AG04450 (cell line): ENCODE measurements at regions of chr10 and their contacts with region 1.

Region 1: DNA sequence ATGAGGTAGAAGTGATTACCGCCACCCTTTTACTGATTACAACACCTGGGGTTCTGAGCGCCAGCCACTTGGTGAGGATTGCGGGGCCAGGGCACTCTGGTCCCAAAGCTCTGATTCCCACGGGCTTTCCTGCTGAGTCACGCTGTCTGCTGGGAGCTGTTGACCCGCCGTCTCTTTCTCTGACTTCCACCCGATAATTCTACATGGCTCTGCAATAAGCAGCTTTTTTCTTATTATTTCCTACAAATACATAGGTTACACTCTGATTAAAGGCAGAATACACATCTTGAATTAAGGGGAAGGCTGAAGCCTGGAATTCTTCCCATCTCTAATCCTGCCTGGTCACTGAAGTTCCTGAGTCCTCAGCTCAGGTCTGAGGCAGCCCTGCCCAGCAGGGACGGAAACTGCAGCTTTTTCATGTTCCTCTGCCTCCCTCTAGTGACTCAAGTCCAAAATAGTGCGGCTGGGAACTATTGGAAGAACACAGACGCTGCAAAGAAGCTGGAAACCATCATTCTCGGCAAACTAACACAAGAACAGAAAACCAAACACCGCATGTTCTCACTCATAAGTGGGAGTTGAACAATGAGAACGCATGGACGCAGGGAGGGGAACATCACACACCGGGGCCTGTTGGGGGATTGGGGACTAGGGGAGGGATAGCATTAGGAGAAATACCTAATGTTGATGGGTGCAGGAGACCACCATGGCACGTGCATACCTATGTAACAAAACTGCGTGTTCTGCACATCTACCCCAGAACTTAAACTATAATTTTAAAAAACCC is 178.3 kb downstream of the PRKCQ start:
- DNase-seq: peak; percentile 84
- H3K4me3 ChIP-seq: peak overlapping the region; percentile 38
- H3K27ac ChIP-seq: peak overlapping the region; percentile 63
- H3K27me3 ChIP-seq: no peaks in the 10 kb centered on the region
- CTCF ChIP-seq: peak; percentile 77

Region 2: DNA sequence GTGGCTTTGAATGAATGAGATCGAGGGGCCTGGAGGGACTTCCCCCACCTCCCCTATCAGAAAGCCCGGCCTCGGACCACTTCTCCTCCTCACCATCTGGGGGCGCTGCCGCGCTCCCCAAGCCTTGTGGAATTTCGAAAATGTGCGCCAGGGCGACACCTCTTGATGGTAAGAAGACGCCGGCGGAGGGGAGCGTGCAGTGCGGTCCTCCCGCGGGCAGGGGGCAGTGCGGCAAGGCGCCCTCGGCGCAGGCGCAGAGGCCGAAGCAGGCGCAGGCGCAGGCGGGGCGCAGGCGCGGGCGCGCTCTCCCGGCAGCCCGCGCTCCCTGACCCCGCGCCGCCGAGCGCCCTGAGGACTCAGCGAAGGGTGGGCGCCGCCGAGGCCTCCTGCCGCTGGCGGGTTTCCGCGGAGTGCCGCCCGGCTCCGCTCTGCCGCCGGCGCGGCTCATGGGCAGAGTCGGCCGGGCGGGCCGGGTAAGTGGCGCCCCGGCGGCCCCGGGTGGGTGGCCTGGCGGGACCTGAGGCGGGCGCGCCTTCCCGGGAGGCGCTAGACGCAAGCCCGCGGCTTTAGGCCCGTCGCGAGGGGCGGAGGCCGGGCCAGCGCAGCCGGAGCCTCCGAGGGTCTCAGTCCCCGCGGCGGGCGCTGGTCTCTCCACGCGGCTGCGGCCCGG is 312.9 kb before region 1 on chr10 and contains the start of gene RBM17:
- CTCF ChIA-PET with region 1: interaction called, 18 read pairs
- POLR2A ChIA-PET with region 1: interaction called, 8 read pairs
- DNase-seq: peak; percentile 93
- H3K4me3 ChIP-seq: peak within 1 kb of the TSS; percentile 96
- H3K27ac ChIP-seq: peak within 1 kb of the TSS; percentile 47
- H3K27me3 ChIP-seq: no peaks in the 10 kb centered on the region
- CTCF ChIP-seq: peak; percentile 99
- polyA plus RNA-seq, gene RBM17: 38.9 and 45.0 TPM in 2 replicates

Region 3: DNA sequence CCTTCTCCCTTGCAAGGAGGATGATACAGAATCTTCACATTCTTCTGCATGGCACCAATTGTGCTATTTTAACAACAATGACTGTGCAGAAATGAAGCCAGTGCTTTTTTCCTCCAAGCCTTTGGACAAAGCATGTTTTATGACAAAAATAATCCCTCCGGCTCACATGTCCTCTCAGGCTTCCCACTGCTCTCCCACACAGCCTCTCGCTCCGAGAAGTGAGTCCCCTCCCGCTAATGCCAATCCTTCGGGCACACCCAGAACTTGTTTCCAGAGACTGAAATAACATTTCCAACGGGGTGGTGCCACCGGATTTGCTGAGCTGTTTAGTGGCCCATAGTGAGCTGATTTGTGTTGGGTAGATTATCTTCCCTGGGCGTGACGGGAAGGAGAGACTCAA is 277.1 kb before region 1 on chr10:
- CTCF ChIA-PET with region 1: interaction called, 16 read pairs
- POLR2A ChIA-PET with region 1: no interaction called
- DNase-seq: no peak
- H3K4me3 ChIP-seq: no peak overlapping the region
- H3K27ac ChIP-seq: no peak overlapping the region
- H3K27me3 ChIP-seq: no peaks in the 10 kb centered on the region
- CTCF ChIP-seq: no peak

Region 4: GRCh38 chr10:6151087-6151977 is 250.4 kb before region 1 on chr10:
- CTCF ChIA-PET with region 1: interaction called, 30 read pairs
- POLR2A ChIA-PET with region 1: no interaction called
- DNase-seq: no peak
- H3K4me3 ChIP-seq: no peak overlapping the region
- H3K27ac ChIP-seq: peak overlapping the region; percentile 21
- H3K27me3 ChIP-seq: no peaks in the 10 kb centered on the region
- CTCF ChIP-seq: peak; percentile 83

Region 5: DNA sequence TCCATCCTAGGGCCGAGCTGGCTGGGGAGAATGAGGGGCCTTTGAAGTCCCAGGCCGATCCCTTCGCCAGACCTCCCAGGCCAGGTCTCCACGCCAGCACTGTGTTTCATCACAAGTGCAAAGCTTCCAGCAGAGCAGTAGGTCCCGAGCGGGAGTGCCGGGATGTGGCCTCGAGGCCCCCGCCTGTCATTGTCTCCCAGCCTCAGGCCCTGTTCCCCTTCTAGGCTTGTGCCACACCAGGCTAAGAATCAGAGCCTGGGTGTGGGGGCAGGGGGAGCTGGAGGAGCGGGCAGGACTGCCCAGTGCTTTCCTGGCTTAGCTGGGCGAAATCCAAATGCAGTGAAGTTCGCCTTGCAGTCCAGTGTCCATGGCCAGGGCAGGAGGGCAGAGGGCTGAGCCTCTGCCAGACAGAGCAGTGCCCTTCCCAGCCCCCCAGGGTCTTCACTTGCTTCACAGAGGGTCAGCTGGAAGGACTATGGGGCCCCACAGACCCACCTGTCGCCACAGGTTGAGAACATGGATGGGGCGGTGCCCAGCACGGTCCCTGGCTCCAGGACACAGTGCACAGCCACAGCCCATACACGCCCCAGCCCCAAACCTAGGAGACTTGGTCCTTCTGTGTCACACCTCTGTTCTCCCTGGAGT is 219.2 kb before region 1 on chr10:
- CTCF ChIA-PET with region 1: interaction called, 10 read pairs
- POLR2A ChIA-PET with region 1: no interaction called
- DNase-seq: no peak
- H3K4me3 ChIP-seq: no peak overlapping the region
- H3K27ac ChIP-seq: no peak overlapping the region
- H3K27me3 ChIP-seq: no peaks in the 10 kb centered on the region
- CTCF ChIP-seq: no peak

Region 6: GRCh38 chr10:6211671-6212635 is 189.8 kb before region 1 on chr10:
- CTCF ChIA-PET with region 1: interaction called, 20 read pairs
- POLR2A ChIA-PET with region 1: no interaction called
- DNase-seq: no peak
- H3K4me3 ChIP-seq: no peak overlapping the region
- H3K27ac ChIP-seq: peak overlapping the region; percentile 21
- H3K27me3 ChIP-seq: no peaks in the 10 kb centered on the region
- CTCF ChIP-seq: no peak

Region 7: DNA sequence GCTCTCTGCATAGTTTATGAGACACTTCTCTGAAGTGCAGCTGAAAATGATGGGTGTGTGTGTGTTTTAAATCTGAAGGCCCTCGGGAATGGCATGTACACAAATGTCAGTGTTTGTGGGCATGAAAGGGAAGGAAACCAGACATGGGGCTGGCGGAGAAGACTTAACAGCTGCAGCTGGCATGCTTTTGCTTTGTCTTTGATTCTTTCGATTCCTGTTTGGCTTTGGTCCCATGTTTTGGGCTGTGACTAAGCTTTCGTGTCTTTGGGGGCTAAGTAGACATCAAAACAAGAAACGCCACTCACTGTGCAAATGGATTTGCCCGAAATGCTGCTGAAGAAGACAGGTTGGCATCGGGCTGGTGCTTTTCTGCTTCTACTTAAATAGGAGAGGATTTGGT is 19.7 kb before region 1 on chr10:
- CTCF ChIA-PET with region 1: interaction called, 14 read pairs
- POLR2A ChIA-PET with region 1: interaction called, 10 read pairs
- DNase-seq: peak; percentile 61
- H3K4me3 ChIP-seq: no peak overlapping the region
- H3K27ac ChIP-seq: peak overlapping the region; percentile 42
- H3K27me3 ChIP-seq: peaks cover 6% of the 10 kb centered on the region
- CTCF ChIP-seq: no peak

Region 8: DNA sequence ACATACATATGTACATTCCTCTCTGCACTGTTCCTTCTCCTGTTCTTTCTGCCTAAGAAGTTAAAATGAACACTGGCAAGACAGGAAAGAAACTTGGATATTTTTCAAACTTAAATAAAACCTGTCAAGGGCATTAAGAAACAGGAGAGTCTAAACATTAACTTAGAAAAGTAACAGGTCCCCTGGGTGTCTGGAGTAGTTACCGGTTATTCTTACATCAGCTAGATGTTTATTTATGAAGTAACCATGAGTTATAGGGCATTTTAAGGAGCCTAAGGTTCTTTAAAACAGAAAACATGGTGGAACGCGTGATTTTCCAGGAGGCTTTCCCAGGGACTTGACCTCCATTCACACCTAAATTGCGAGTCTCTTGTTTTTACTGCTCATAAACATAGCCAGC is 30.1 kb after region 1 on chr10:
- CTCF ChIA-PET with region 1: no interaction called
- POLR2A ChIA-PET with region 1: no interaction called
- DNase-seq: no peak
- H3K4me3 ChIP-seq: no peak overlapping the region
- H3K27ac ChIP-seq: no peak overlapping the region
- H3K27me3 ChIP-seq: no peaks in the 10 kb centered on the region
- CTCF ChIP-seq: no peak

Region 9: GRCh38 chr10:6445501-6446316 is 44.0 kb after region 1 on chr10:
- CTCF ChIA-PET with region 1: no interaction called
- POLR2A ChIA-PET with region 1: no interaction called
- DNase-seq: peak; percentile 2
- H3K4me3 ChIP-seq: no peak overlapping the region
- H3K27ac ChIP-seq: no peak overlapping the region
- H3K27me3 ChIP-seq: peaks cover 8% of the 10 kb centered on the region
- CTCF ChIP-seq: peak; percentile 68

Region 10: DNA sequence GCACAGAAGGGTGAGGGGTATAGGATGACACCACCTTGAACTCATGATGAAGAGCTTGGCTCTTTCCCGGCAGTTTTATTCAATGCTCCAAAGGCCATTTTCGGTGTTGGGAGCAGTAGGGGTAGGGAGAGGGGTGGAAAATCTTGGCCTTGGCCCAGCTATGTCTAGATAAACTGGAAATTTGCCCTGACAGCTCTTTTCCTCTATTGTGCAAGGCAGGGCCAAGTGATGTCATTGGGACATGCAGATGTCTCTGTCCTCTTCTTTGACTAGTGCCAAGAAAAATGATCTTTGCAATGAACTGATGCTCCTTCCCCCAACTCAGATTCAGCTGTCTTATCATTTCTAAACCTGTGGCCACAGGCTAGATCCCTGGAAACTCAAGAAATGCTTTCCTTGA is 206.0 kb after region 1 on chr10:
- CTCF ChIA-PET with region 1: no interaction called
- POLR2A ChIA-PET with region 1: no interaction called
- DNase-seq: no peak
- H3K4me3 ChIP-seq: no peak overlapping the region
- H3K27ac ChIP-seq: no peak overlapping the region
- H3K27me3 ChIP-seq: no peaks in the 10 kb centered on the region
- CTCF ChIP-seq: no peak